Ascending aorta (tissue), 2 donors: ENCODE measurements at regions of chr5 and their contacts with region 1.

Region 1: GRCh38 chr5:111092062-111092853 is at the start of gene WDR36:
- DNase-seq: peak; percentile 37 to 92
- H3K4me3 ChIP-seq: peak within 1 kb of the TSS; percentile 81 to 82
- H3K27ac ChIP-seq: peak within 1 kb of the TSS; percentile 64 to 69
- H3K4me1 ChIP-seq: peaks cover 0 to 8% of the 10 kb centered on the region in 2 donors
- H3K27me3 ChIP-seq: no peaks in the 10 kb centered on the region
- CTCF ChIP-seq: no peak
- total RNA-seq, gene WDR36: 8.4 TPM

Region 2: DNA sequence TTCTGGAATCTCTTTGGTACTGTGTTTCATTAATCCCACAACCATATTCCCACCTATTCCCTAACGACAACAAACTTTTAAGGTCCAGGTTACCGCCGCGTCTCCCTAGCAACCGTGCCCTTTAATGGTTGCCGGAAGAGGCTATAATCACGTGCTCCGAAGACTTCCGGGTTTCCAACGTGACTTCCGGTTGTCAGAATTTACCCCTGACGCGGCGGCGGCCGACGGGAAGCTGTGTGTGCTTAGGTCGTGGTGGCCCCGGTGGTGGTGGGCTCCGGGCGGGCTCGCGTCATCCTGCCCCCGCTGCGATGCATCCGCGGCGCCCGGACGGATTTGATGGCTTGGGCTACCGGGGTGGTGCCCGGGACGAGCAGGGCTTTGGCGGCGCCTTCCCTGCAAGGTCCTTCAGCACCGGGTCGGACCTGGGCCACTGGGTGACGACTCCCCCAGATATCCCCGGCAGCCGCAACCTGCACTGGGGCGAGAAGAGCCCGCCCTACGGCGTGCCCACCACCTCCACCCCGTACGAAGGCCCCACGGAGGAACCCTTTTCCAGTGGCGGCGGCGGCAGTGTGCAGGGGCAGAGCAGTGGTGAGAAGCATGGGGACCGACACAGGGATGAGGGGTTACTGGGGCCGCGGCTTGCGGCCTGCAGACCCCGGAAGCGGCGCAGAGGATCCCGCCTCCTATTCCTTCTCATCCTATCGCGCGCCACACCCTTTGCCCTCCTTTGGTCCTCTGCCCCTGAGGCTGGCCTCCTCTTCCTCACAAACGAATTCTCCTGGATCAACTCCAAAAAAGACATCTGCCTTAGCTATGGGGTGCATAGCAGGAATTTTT is 353.2 kb before region 1 on chr5 and contains the start of gene SLC25A46:
- intact Hi-C with region 1: loop called (anchors 5 kb)
- DNase-seq: peak; percentile 63 to 94
- H3K4me3 ChIP-seq: peak within 1 kb of the TSS; percentile 85 to 98
- H3K27ac ChIP-seq: peak within 1 kb of the TSS; percentile 78 to 87
- H3K4me1 ChIP-seq: peaks cover 2 to 3% of the 10 kb centered on the region in 2 donors
- H3K27me3 ChIP-seq: no peaks in the 10 kb centered on the region
- CTCF ChIP-seq: no peak
- total RNA-seq, gene SLC25A46: 22.1 TPM

Region 3: DNA sequence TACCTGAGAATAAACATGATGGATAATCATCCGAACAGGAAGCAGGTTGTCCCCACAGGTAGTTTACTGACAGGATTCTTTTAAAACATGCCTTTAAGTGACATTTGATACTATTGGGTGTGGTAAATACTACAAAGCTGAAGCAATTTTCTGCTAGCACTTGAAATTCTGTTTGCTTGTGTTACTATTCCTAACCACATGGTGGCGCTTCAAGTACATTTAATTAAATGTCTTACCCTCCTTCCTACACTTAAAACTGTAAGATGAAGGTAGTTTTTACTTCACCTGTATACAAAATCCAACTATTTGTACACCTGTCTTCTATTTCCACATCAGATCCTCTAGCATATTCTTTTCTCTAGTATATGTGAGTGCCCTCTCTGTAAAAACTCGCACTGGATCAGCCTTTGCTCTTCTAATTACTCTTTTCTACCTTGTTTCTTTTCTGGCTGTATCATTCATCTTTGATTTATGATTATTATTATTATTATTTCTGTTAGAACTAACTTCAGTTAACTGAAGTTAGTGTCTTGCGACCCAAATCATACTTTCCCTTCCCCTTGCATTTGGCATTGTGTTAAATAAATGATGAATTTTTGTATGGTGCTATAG is 335.0 kb before region 1 on chr5:
- intact Hi-C with region 1: loop called (anchors 5 kb)
- DNase-seq: no peak
- H3K4me3 ChIP-seq: no peak overlapping the region
- H3K27ac ChIP-seq: no peak overlapping the region
- H3K4me1 ChIP-seq: no peaks in the 10 kb centered on the region
- H3K27me3 ChIP-seq: no peaks in the 10 kb centered on the region
- CTCF ChIP-seq: peak; percentile 28 to 64 (median 58)

Region 4: GRCh38 chr5:110916381-110917049 is 175.7 kb before region 1 on chr5:
- intact Hi-C with region 1: no loop called
- DNase-seq: no peak
- H3K4me3 ChIP-seq: no peak overlapping the region
- H3K27ac ChIP-seq: peak overlapping the region; percentile 24 to 60
- H3K4me1 ChIP-seq: peaks cover 0 to 30% of the 10 kb centered on the region in 2 donors
- H3K27me3 ChIP-seq: no peaks in the 10 kb centered on the region
- CTCF ChIP-seq: no peak

Region 5: GRCh38 chr5:110951373-110951791 is 140.9 kb before region 1 on chr5:
- intact Hi-C with region 1: no loop called
- DNase-seq: no peak
- H3K4me3 ChIP-seq: no peak overlapping the region
- H3K27ac ChIP-seq: no peak overlapping the region
- H3K4me1 ChIP-seq: no peaks in the 10 kb centered on the region
- H3K27me3 ChIP-seq: no peaks in the 10 kb centered on the region
- CTCF ChIP-seq: no peak

Region 6: DNA sequence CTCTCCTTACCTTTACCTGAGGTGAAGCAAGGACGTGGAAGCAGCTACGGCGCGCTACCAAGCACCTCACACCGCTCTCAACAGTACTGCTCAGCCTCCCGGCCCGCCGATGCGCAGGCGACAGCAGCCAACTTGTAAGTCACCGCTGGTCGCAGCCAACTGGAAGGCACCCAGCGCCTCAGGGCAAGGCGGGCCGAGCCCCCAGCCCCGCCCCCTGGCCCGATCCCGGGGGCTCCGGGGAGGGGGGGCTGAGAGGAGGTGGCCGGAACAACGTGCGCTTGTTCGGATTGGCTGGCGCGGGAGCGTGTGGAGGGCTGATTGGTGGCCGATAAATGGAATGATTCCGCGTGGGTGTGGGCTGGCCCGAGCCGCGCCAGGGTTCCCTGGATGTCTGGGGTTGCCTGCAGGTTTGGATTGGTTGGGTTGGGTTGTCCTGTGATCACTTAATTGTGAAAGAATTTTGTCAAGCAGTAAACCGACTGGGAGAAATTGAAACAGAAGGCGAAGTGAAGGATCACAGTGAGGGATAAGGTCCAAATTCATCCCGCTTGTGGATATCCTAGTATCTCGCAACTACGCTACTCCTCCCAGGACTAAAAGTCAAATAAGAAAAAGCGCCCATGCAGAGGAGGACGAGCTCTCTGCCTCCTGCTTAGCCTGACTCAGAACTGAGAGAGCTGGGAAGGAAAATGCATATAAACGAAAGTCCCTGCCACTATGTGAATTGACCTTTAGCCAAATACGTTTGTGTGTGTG is 420.3 kb after region 1 on chr5 and contains the start of gene STARD4:
- intact Hi-C with region 1: loop called (anchors 2 kb)
- DNase-seq: peak; percentile 90 to 98
- H3K4me3 ChIP-seq: peak within 1 kb of the TSS; percentile 89 to 90
- H3K27ac ChIP-seq: peak within 1 kb of the TSS; percentile 86 to 89
- H3K4me1 ChIP-seq: peaks cover 0 to 2% of the 10 kb centered on the region in 2 donors
- H3K27me3 ChIP-seq: no peaks in the 10 kb centered on the region
- CTCF ChIP-seq: no peak
- total RNA-seq, gene STARD4: 1.5 TPM